Sciatic nerve (tissue), 2 donors: ENCODE measurements at regions of chr5 and their contacts with region 1.

Region 1: GRCh38 chr5:154683101-154683880 is 71.9 kb upstream of the LARP1 start:
- DNase-seq: no peak
- ATAC-seq: no peak

Region 2: GRCh38 chr5:154714266-154714986 is 31.1 kb after region 1 on chr5:
- intact Hi-C with region 1: no loop called
- DNase-seq: no peak
- ATAC-seq: peak; percentile 52

Region 3: GRCh38 chr5:154801083-154801482 is 117.8 kb after region 1 on chr5:
- intact Hi-C with region 1: loop called (anchors 10 kb)
- DNase-seq: no peak
- ATAC-seq: no peak

Region 4: GRCh38 chr5:155017610-155018009 is 334.3 kb after region 1 on chr5:
- intact Hi-C with region 1: no loop called
- DNase-seq: no peak
- ATAC-seq: no peak